ENCODE measurements at regions of chr5 and their contacts with region 1.

Region 1: DNA sequence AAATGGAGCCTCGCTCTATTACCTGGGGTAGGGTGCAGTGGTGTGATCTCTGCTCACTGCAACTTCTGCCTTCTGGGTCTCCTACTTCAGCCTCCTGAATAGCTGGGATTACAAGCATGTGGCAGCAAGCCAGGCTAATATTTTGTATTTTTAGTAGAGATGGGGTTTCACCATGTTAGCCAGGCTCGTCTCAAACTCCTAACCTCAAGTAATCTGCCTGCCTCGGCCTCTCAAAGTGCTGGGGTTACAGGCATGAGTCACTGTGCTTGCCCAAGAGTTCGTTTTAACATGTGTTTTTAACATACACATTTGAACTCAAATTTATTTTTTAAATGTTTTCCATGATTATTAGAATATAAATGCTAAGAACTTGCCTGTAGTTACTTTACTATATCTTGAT is 34.2 kb downstream of the MARCHF6 start:
- DNase-seq: no peak
- H3K4me3 ChIP-seq: no peak overlapping the region
- H3K27ac ChIP-seq: no peak overlapping the region
- H3K4me1 ChIP-seq: no peaks in the 10 kb centered on the region
- H3K27me3 ChIP-seq: no peaks in the 10 kb centered on the region
- CTCF ChIP-seq: no peak

Region 2: GRCh38 chr5:9971301-9971700 is 416.4 kb before region 1 on chr5:
- CTCF ChIA-PET with region 1: no interaction called
- POLR2A ChIA-PET with region 1: no interaction called
- intact Hi-C with region 1: no loop called
- DNase-seq: peak in 1 of 2 experiments; percentile 33
- H3K4me3 ChIP-seq: no peak overlapping the region
- H3K27ac ChIP-seq: peak overlapping the region; percentile 65
- H3K4me1 ChIP-seq: no peaks in the 10 kb centered on the region
- H3K27me3 ChIP-seq: no peaks in the 10 kb centered on the region
- CTCF ChIP-seq: no peak

Region 3: DNA sequence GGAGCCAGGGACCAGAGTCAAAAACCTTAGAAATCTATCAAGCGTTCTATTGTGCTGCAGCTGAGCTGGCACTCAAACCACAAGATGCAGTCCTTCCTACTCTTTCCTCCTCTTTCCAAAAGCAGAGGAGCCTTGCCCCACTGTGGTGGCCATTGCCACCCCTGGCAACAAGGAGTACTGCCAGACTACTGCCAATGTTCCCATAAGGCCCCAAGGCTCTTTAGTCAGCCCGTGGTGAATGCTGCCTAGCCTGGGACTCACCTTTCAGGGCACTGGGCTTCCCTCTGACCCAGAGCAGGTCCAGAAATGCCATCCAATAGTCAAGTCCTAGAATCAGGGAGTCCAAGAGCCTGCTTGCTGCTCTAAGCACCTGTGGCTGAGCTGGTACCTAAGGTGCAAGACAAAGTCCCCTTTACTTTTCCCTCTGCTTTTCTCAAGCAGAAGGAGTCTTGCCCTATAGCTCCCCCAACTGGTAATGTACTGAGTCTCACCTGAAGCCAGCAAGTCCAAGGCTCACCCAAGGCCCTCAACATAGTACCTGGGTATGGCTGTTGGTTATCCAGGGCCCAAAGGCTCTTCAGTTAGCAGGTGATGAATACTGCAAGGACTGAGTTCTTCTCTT is 357.4 kb before region 1 on chr5:
- CTCF ChIA-PET with region 1: no interaction called
- POLR2A ChIA-PET with region 1: no interaction called
- intact Hi-C with region 1: no loop called
- DNase-seq: no peak
- H3K4me3 ChIP-seq: no peak overlapping the region
- H3K27ac ChIP-seq: no peak overlapping the region
- H3K4me1 ChIP-seq: no peaks in the 10 kb centered on the region
- H3K27me3 ChIP-seq: no peaks in the 10 kb centered on the region
- CTCF ChIP-seq: peak; percentile 68

Region 4: GRCh38 chr5:10424124-10424731 is 36.5 kb after region 1 on chr5:
- CTCF ChIA-PET with region 1: no interaction called
- POLR2A ChIA-PET with region 1: interaction called, 25 read pairs
- intact Hi-C with region 1: no loop called
- DNase-seq: no peak
- H3K4me3 ChIP-seq: no peak overlapping the region
- H3K27ac ChIP-seq: no peak overlapping the region
- H3K4me1 ChIP-seq: peaks cover 15% of the 10 kb centered on the region
- H3K27me3 ChIP-seq: no peaks in the 10 kb centered on the region
- CTCF ChIP-seq: peak; percentile 51

Region 5: GRCh38 chr5:10432059-10433008 is 44.6 kb after region 1 on chr5:
- CTCF ChIA-PET with region 1: no interaction called
- POLR2A ChIA-PET with region 1: no interaction called
- intact Hi-C with region 1: loop called (anchors 1 kb)
- DNase-seq: no peak
- H3K4me3 ChIP-seq: no peak overlapping the region
- H3K27ac ChIP-seq: no peak overlapping the region
- H3K4me1 ChIP-seq: no peaks in the 10 kb centered on the region
- H3K27me3 ChIP-seq: no peaks in the 10 kb centered on the region
- CTCF ChIP-seq: no peak

Region 6: GRCh38 chr5:10735569-10736276 is 348.0 kb after region 1 on chr5:
- CTCF ChIA-PET with region 1: no interaction called
- POLR2A ChIA-PET with region 1: no interaction called
- intact Hi-C with region 1: no loop called
- DNase-seq: no peak
- H3K4me3 ChIP-seq: no peak overlapping the region
- H3K27ac ChIP-seq: no peak overlapping the region
- H3K4me1 ChIP-seq: peaks cover 28% of the 10 kb centered on the region
- H3K27me3 ChIP-seq: no peaks in the 10 kb centered on the region
- CTCF ChIP-seq: no peak

Region 7: DNA sequence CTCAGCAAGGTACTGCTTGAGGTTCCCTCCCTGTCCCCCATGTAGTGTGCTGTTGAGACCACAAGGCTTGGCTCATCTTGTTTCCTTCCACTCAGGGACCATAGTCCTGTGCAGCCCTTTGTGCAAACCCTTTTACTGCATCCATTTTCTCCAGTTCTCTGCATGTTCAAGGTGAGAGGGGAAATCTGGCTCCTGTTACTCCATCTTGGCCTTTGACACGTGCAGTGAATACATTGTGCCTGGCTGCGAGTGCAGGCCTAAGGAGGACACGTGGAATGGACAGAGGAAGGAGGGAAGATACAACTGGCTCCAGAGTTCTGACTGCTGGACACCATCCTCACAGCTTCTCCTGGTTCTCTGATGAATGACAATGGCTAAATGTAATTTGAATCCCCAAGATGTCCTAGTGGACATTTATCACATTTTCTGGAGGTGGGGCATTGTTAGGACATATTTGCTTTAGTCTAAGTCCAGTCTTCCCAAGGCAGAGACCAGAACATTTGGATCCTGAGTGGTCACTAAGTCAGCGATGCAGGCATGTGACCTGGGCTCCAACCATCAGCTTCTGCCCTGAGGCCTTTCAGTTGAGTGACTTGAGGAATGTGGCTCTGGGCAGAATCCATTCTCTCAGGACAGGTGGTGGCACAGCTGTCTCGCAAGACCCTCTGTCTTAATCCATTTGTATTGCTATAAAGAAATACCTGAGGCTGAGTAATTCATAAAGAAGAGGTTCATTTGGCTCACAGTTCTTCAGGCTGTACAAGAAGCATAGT is 562.4 kb after region 1 on chr5:
- CTCF ChIA-PET with region 1: no interaction called
- POLR2A ChIA-PET with region 1: no interaction called
- intact Hi-C with region 1: no loop called
- DNase-seq: no peak
- H3K4me3 ChIP-seq: no peak overlapping the region
- H3K27ac ChIP-seq: no peak overlapping the region
- H3K4me1 ChIP-seq: no peaks in the 10 kb centered on the region
- H3K27me3 ChIP-seq: no peaks in the 10 kb centered on the region
- CTCF ChIP-seq: no peak